ENCODE measurements at regions of chr3 and their contacts with region 1.

Region 1: GRCh38 chr3:20511863-20512505 is 326.0 kb upstream of the SGO1 start:
- DNase-seq: no peak
- H3K4me3 ChIP-seq: no peak overlapping the region
- H3K27ac ChIP-seq: no peak overlapping the region
- H3K4me1 ChIP-seq: no peaks in the 10 kb centered on the region
- H3K27me3 ChIP-seq: no peaks in the 10 kb centered on the region
- CTCF ChIP-seq: peak; percentile 56 to 58

Region 2: DNA sequence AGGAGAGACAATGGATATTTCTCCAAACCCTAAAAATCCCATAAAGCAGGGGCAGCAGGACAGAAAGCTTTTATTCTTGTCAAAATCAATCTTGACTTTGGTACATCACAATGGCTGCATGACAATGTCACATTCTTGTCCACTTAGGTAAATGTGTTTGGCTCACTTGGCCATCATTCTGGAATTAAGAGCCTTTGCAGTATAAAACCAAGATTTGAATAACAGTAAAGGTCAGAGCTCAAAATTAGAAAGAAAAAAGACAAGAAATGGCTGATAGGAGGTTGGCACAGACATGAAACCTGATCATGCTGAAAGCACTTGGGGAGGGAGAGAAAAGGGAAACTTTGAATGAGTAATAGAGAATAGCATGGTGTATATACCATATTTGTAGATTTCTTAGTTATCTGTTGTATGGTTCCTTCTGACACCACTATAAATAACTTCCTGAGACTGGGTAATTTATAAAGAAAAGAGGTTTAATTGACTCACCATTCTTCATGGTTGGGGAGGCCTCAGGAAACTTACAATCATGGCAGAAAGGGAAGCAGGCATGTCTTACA is 167.5 kb before region 1 on chr3:
- intact Hi-C with region 1: no loop called
- DNase-seq: no peak
- H3K4me3 ChIP-seq: no peak overlapping the region
- H3K27ac ChIP-seq: no peak overlapping the region
- H3K4me1 ChIP-seq: no peaks in the 10 kb centered on the region
- H3K27me3 ChIP-seq: no peaks in the 10 kb centered on the region
- CTCF ChIP-seq: no peak

Region 3: DNA sequence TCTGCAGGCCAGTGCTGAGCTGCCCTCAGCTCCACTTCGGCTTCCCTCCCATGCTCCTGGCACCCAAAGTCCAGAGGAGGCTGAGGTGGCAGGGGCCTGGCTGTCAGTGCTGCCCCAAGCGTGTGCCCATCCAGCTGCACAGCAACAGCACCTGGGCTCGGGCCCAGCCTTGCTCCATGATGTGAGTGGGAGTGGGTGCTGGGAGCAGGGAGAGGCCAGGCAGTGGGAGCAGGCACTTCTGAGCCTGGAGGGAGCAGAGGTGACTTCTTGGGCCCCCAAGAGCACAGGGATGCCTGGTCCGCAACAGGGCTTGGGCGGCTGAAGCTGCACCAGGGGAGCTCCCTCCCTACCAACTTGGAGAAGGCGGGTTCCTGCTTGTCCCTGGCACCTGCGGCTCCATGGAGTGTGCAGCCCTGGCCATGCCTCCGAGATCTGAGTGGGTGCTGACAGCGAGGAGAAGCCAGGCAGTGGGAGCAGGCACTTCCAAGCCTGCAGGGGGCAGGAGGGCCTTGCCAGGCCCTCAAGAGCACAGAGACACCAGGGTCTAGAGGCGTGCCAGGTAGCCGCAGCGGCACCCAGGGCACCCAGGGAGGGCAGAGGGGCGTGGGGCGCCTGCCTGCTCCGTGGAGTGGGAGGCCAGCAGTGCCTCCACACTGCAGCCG is 40.8 kb after region 1 on chr3:
- intact Hi-C with region 1: no loop called
- DNase-seq: no peak
- H3K4me3 ChIP-seq: no peak overlapping the region
- H3K27ac ChIP-seq: no peak overlapping the region
- H3K4me1 ChIP-seq: no peaks in the 10 kb centered on the region
- H3K27me3 ChIP-seq: no peaks in the 10 kb centered on the region
- CTCF ChIP-seq: no peak

Region 4: GRCh38 chr3:21028412-21028811 is 516.4 kb after region 1 on chr3:
- intact Hi-C with region 1: no loop called
- DNase-seq: no peak
- H3K4me3 ChIP-seq: no peak overlapping the region
- H3K27ac ChIP-seq: no peak overlapping the region
- H3K4me1 ChIP-seq: no peaks in the 10 kb centered on the region
- H3K27me3 ChIP-seq: no peaks in the 10 kb centered on the region
- CTCF ChIP-seq: no peak

Region 5: GRCh38 chr3:21049334-21050062 is 537.5 kb after region 1 on chr3:
- intact Hi-C with region 1: no loop called
- DNase-seq: no peak
- H3K4me3 ChIP-seq: no peak overlapping the region
- H3K27ac ChIP-seq: no peak overlapping the region
- H3K4me1 ChIP-seq: no peaks in the 10 kb centered on the region
- H3K27me3 ChIP-seq: no peaks in the 10 kb centered on the region
- CTCF ChIP-seq: no peak

Region 6: DNA sequence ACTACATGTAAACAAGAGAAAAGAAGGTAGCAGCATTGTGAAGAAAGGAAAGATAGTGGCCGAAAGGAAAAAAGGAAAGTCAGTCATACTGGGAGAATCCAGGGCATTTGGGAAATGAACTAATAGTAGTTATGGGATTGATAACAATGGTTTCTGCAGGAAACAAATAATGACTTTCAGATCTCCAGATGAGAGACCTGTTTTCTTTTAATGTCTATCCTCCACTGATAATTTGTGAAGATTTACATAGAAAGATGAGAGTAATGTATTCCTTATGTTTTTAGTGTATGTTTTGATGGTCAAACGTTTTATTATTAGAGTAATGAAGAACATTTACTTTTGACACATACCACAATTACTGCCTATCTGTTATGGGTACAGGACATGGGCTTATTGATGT is 1254.0 kb after region 1 on chr3:
- intact Hi-C with region 1: loop called (anchors 10 kb)
- DNase-seq: no peak
- H3K4me3 ChIP-seq: no peak overlapping the region
- H3K27ac ChIP-seq: no peak overlapping the region
- H3K4me1 ChIP-seq: no peaks in the 10 kb centered on the region
- H3K27me3 ChIP-seq: no peaks in the 10 kb centered on the region
- CTCF ChIP-seq: no peak

Measured in tibial artery (tissue), 4 donors.